ENCODE measurements at regions of chr12 and their contacts with region 1.

Region 1: DNA sequence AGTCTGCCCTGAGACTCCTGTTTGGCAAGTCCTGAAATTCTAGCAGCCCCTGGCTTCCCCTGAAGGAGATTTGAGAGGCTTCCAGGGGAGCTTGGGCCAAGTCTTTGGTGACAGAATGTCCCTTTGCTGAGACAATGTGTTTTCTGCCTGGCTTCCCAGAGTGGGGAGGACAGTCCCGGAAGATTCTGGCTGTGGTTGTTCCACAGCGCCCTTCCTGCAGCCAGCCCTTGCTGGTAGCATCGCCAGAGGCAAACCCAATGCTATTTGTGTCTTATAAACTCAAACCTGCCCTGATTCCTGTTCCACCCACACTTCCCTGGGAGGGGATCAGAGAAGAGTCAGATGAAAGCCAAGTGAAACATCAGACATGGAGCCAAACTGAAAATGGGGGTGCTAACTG is 56.4 kb upstream of the OAS1 start:
- DNase-seq: no peak
- H3K4me3 ChIP-seq: no peak overlapping the region
- H3K27ac ChIP-seq: no peak overlapping the region
- H3K4me1 ChIP-seq: peaks cover 0 to 9% (median 3%) of the 10 kb centered on the region in 4 experiments; a peak in 3 of 7 replicates
- H3K27me3 ChIP-seq: peaks cover 0 to 5% (median 0%) of the 10 kb centered on the region in 4 experiments; a peak in 3 of 7 replicates
- CTCF ChIP-seq: no peak
- EP300 ChIP-seq: no peak
- POLR2A ChIP-seq: no peak
- RAD21 ChIP-seq: no peak

Region 2: DNA sequence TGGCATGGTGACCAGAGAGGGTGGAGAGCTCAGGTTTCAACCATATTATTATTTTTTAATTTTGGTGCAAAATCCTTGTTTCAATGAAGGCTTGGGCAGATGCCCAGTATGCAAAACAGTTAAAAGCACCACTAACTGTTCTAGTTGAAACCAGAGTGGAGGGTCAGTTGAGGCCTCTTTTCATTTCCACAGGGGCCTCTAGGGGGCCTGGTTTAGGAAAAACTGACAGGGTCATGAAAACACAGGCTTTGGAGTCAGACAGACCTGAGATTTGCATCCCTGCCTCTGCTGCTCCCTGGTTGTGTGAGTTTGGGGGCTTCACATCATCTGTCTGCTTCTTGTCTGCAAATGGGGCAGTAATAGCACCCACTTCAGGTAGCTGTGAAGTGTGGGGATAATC is 62.2 kb before region 1 on chr12:
- CTCF ChIA-PET with region 1: interaction called, 11 read pairs
- POLR2A ChIA-PET with region 1: no interaction called
- DNase-seq: no peak
- H3K4me3 ChIP-seq: no peak overlapping the region
- H3K27ac ChIP-seq: no peak overlapping the region
- H3K4me1 ChIP-seq: peaks cover 7 to 11% (median 10%) of the 10 kb centered on the region in 4 experiments; a peak in 6 of 7 replicates
- H3K27me3 ChIP-seq: peaks cover 6 to 20% (median 16%) of the 10 kb centered on the region in 4 experiments; a peak in 6 of 7 replicates
- CTCF ChIP-seq: peak; percentile 11 to 54 (median 52)
- EP300 ChIP-seq: no peak
- POLR2A ChIP-seq: no peak
- RAD21 ChIP-seq: peak; percentile 28 to 45

Region 3: DNA sequence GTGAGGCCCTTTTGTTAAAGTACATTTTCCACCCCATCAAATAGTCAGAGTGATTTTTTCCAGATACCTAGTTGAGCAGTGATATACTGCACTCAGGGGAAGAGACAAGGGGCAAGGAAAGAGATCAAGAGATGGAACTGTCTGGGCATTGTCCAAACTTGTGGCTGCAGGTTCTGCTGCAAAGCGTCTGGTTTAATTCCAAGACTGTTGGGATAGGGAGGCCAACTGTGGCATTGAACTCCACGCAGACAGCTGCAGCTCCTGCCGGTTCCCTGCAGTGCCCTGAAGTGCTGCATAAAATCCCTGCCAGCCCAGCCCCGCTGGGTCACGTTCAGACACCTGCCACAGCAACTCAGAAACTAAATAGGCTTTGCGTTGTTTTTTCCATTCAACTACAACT is 28.3 kb before region 1 on chr12:
- CTCF ChIA-PET with region 1: interaction called, 11 read pairs
- POLR2A ChIA-PET with region 1: interaction called, 4 read pairs
- DNase-seq: no peak
- H3K4me3 ChIP-seq: no peak overlapping the region
- H3K27ac ChIP-seq: no peak overlapping the region
- H3K4me1 ChIP-seq: peaks cover 0 to 11% (median 5%) of the 10 kb centered on the region in 4 experiments; a peak in 4 of 7 replicates
- H3K27me3 ChIP-seq: no peaks in the 10 kb centered on the region
- CTCF ChIP-seq: no peak
- EP300 ChIP-seq: no peak
- POLR2A ChIP-seq: no peak
- RAD21 ChIP-seq: no peak

Region 4: DNA sequence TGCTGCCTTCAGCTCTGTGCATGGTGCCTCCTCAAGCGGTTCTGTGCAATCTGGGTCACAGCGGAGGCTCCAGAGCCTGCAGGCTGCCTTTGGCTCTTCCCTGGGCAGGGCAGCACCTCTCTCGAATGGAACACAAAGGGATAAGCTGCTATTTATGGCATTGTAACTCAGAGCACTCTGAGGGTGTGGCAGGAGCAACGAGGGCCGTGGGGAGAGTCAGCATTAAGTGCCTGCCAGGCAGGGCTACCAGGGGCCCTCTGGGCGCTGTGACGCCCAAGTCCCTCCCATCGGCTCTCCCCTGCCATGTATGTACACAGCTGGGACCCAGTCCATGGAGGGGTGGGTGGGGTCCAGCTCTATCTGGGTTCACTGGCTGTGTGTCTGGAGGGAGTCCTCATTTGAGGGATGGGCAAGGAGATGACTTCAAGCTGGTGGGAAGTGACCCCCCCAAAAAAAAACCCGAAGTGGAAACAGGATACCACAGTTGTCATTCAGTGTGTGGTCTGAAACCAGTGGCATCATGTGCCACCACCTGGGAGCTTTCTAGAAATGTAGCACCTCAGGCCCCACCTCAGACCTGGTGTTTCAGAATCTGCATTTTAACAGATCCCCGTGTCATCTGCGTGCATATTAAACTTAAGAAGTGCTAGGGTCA is 12.4 kb after region 1 on chr12:
- CTCF ChIA-PET with region 1: interaction called, 14 read pairs
- POLR2A ChIA-PET with region 1: no interaction called
- DNase-seq: no peak
- H3K4me3 ChIP-seq: no peak overlapping the region
- H3K27ac ChIP-seq: no peak overlapping the region
- H3K4me1 ChIP-seq: no peaks in the 10 kb centered on the region; a peak in 1 of 7 replicates
- H3K27me3 ChIP-seq: no peaks in the 10 kb centered on the region; a peak in 1 of 7 replicates
- CTCF ChIP-seq: no peak
- EP300 ChIP-seq: no peak
- POLR2A ChIP-seq: no peak
- RAD21 ChIP-seq: no peak

Region 5: DNA sequence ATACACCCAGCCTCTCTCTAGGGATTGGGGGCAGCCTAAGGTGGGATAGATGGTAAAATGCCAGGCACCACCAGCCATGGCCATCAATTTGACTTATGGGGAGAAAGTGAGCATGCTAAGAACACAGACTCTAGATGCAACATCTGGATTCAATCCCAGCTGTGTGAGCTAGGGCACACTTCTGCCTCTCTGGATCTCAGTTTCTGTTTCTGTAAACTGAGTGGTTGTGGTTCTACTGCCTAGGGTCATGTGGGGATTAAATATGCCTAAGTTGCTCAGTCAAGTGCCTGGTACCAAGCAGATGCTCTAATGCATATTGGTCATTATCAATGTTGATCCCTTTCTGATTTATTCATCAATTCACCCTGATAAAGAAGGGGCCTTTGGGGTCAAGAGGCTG is 43.7 kb after region 1 on chr12:
- CTCF ChIA-PET with region 1: no interaction called
- POLR2A ChIA-PET with region 1: no interaction called
- DNase-seq: no peak
- H3K4me3 ChIP-seq: no peak overlapping the region
- H3K27ac ChIP-seq: no peak overlapping the region
- H3K4me1 ChIP-seq: peaks cover 0 to 2% (median 0%) of the 10 kb centered on the region in 4 experiments; a peak in 1 of 7 replicates
- H3K27me3 ChIP-seq: no peaks in the 10 kb centered on the region
- CTCF ChIP-seq: no peak
- EP300 ChIP-seq: no peak
- POLR2A ChIP-seq: no peak
- RAD21 ChIP-seq: no peak

Measured in H1 (cell line).